H1 (cell line): ENCODE measurements at regions of chr2 and their contacts with region 1.

Region 1: GRCh38 chr2:126971481-126972278 is 73.0 kb downstream of the TEX51 start:
- DNase-seq: peak; percentile 56 to 90
- H3K4me3 ChIP-seq: no peak overlapping the region
- H3K27ac ChIP-seq: no peak overlapping the region
- H3K4me1 ChIP-seq: peaks cover 0 to 17% (median 5%) of the 10 kb centered on the region in 4 experiments; a peak in 5 of 7 replicates
- H3K27me3 ChIP-seq: peaks cover 0 to 9% (median 5%) of the 10 kb centered on the region in 4 experiments; a peak in 3 of 7 replicates
- CTCF ChIP-seq: peak; percentile 87 to 95 (median 89)
- EP300 ChIP-seq: no peak
- POLR2A ChIP-seq: no peak
- RAD21 ChIP-seq: peak; percentile 96 to 99

Region 2: GRCh38 chr2:126527836-126528507 is 443.7 kb before region 1 on chr2:
- CTCF ChIA-PET with region 1: interaction called, 21 read pairs
- POLR2A ChIA-PET with region 1: no interaction called
- DNase-seq: peak; percentile 39 to 79
- H3K4me3 ChIP-seq: no peak overlapping the region
- H3K27ac ChIP-seq: no peak overlapping the region
- H3K4me1 ChIP-seq: no peaks in the 10 kb centered on the region
- H3K27me3 ChIP-seq: no peaks in the 10 kb centered on the region
- CTCF ChIP-seq: peak; percentile 74 to 88 (median 85)
- EP300 ChIP-seq: no peak
- POLR2A ChIP-seq: no peak
- RAD21 ChIP-seq: peak; percentile 87 to 88

Region 3: DNA sequence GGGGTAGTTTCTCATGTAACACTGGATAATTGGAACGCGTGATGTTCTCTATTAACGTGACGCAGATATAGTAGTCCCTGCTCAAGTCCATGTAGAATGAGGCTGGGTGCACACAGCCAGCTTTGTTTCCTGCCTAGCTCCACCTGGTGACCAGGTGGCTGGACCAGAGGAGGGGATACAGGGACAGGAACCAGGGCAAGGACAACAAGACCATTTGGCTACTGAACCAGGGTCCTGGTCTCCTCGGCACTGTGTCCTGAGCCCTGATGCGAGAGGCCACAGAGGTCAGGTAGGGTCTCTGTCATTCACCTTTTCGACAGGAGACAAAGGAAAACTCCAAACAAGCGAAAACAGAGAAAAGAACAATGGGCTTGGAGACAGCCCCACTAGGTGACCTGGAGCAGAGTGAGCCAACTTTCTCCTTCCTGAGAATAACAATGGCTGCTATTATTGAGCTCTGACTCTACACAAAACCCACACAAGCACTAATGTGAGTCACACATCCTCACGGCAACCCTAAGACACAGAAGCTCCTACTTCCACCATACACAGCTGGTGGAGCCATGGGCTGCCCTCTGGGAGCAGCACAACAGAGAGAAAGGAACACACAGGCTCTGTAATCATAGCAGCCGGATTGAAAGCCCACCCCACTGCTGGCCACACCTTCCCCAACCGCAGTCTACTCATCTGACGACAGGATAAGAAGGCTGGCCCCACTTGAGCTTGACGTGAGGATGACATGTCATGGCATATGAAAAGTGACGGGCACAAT is 140.3 kb before region 1 on chr2:
- CTCF ChIA-PET with region 1: interaction called, 20 read pairs
- POLR2A ChIA-PET with region 1: no interaction called
- DNase-seq: peak in 1 of 2 experiments; percentile 17
- H3K4me3 ChIP-seq: no peak overlapping the region
- H3K27ac ChIP-seq: peak overlapping the region; percentile 40; the same call in 1 of the 2 replicates
- H3K4me1 ChIP-seq: peaks cover 0 to 7% (median 2%) of the 10 kb centered on the region in 4 experiments; a peak in 3 of 7 replicates
- H3K27me3 ChIP-seq: no peaks in the 10 kb centered on the region
- CTCF ChIP-seq: no peak
- EP300 ChIP-seq: no peak
- POLR2A ChIP-seq: no peak
- RAD21 ChIP-seq: no peak

Region 4: DNA sequence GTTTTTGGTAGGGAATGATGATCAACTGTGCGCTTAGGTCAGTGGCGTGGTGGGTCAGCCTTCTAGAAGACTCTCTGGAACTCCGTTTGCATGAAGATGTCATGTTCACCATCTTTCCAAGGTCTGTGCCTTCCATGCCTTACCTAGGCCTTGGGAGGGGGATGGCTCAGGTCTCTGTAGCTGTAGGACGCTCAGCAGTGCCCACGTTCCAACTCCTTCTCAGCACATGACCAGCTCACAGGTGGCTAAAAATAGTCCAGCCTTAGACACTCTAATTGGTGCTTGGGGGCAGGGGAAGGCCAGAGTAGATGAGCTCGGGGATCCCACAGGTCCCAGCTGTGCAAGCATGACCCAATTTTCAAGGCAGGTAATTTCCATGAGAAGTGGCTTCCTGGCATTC is 115.3 kb before region 1 on chr2:
- CTCF ChIA-PET with region 1: interaction called, 18 read pairs
- POLR2A ChIA-PET with region 1: no interaction called
- DNase-seq: no peak
- H3K4me3 ChIP-seq: no peak overlapping the region
- H3K27ac ChIP-seq: no peak overlapping the region
- H3K4me1 ChIP-seq: no peaks in the 10 kb centered on the region; a peak in 1 of 7 replicates
- H3K27me3 ChIP-seq: no peaks in the 10 kb centered on the region
- CTCF ChIP-seq: no peak
- EP300 ChIP-seq: no peak
- POLR2A ChIP-seq: no peak
- RAD21 ChIP-seq: no peak

Region 5: DNA sequence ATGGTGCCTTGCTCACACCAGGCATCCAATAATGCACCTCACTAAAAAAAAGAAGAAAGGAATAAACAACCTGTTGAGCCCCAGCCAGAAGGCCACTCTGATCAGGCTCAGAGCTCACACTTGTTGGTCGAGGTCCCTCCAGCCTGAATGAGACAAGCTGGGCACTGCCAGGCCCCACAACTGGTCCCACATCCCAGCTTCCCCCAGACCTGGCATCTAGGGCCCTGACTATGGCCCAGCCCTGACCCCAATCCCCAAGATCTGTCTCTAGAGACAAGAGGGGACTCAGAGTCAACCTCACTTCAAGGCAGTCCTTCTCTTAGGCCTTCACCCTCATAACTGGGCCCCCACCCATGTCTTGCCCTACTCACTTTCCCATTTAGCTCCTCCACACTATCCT is 50.6 kb before region 1 on chr2:
- CTCF ChIA-PET with region 1: no interaction called
- POLR2A ChIA-PET with region 1: no interaction called
- DNase-seq: no peak
- H3K4me3 ChIP-seq: no peak overlapping the region
- H3K27ac ChIP-seq: no peak overlapping the region
- H3K4me1 ChIP-seq: no peaks in the 10 kb centered on the region
- H3K27me3 ChIP-seq: no peaks in the 10 kb centered on the region
- CTCF ChIP-seq: no peak
- EP300 ChIP-seq: no peak
- POLR2A ChIP-seq: no peak
- RAD21 ChIP-seq: no peak

Region 6: GRCh38 chr2:126945118-126945517 is 26.6 kb before region 1 on chr2:
- CTCF ChIA-PET with region 1: interaction called, 11 read pairs
- POLR2A ChIA-PET with region 1: no interaction called
- DNase-seq: no peak
- H3K4me3 ChIP-seq: no peak overlapping the region
- H3K27ac ChIP-seq: no peak overlapping the region
- H3K4me1 ChIP-seq: peaks cover 5 to 10% (median 10%) of the 10 kb centered on the region in 4 experiments
- H3K27me3 ChIP-seq: peaks cover 0 to 42% (median 17%) of the 10 kb centered on the region in 4 experiments; a peak in 5 of 7 replicates
- CTCF ChIP-seq: no peak
- EP300 ChIP-seq: no peak
- POLR2A ChIP-seq: no peak
- RAD21 ChIP-seq: no peak

Region 7: GRCh38 chr2:127043367-127044164 is 71.9 kb after region 1 on chr2:
- CTCF ChIA-PET with region 1: interaction called, 12 read pairs
- POLR2A ChIA-PET with region 1: no interaction called
- DNase-seq: peak in 1 of 2 experiments; percentile 43
- H3K4me3 ChIP-seq: no peak overlapping the region
- H3K27ac ChIP-seq: no peak overlapping the region
- H3K4me1 ChIP-seq: peaks cover 0 to 6% (median 0%) of the 10 kb centered on the region in 4 experiments; a peak in 3 of 7 replicates
- H3K27me3 ChIP-seq: no peaks in the 10 kb centered on the region
- CTCF ChIP-seq: no peak
- EP300 ChIP-seq: no peak
- POLR2A ChIP-seq: no peak
- RAD21 ChIP-seq: no peak

Region 8: DNA sequence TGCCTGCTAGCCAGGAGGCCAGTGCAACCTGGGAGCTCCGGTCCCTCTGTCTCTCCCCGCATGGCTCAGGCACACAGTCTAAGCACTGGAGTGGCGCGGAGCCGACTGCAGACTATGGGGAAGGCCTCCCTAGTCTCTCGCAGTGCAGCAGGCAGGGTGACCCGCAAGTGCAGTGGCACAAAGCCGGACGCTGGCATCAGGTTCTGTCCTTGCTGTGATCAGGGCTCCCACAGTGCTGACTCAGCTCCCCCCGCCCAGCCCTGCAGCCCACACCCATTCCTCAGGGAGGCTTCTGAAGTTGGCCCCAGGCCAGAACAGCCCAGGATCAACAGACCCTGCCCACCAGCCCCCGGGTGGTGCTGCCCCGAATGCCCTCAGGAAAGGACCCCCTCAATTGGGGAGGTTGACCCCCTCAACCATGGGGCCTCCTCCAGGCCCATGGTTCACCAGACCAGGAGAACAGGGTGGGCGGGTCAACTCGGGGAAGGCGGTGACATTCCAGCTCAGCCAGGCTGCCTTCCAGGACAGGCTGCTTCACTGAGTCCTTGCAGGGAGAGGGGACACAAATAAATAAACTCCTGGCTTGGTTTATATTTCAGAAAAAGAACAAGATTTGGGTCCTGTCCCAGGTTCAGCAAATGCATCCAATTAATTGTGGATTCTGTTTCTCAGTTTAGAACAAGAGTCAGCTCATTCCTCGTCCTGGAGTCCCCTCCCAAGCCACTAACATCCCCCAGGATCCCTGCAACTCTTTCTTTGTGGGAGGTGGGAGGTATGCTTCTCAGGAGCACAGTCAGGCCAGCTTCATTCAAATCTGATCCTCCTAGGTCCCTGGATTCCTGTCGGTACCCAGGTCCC is 123.1 kb after region 1 on chr2:
- CTCF ChIA-PET with region 1: no interaction called
- POLR2A ChIA-PET with region 1: no interaction called
- DNase-seq: no peak
- H3K4me3 ChIP-seq: no peak overlapping the region
- H3K27ac ChIP-seq: no peak overlapping the region; the same call in 1 of the 2 replicates
- H3K4me1 ChIP-seq: peaks cover 0 to 30% (median 14%) of the 10 kb centered on the region in 4 experiments; a peak in 6 of 7 replicates
- H3K27me3 ChIP-seq: no peaks in the 10 kb centered on the region
- CTCF ChIP-seq: no peak
- EP300 ChIP-seq: no peak
- POLR2A ChIP-seq: no peak
- RAD21 ChIP-seq: no peak